ENCODE measurements at regions of chr20 and their contacts with region 1.

Region 1: GRCh38 chr20:33810885-33811777 is at the start of gene CHMP4B:
- DNase-seq: peak; percentile 100
- H3K4me3 ChIP-seq: peak within 1 kb of the TSS; percentile 49
- H3K4me3 Mint-ChIP-seq: peak within 1 kb of the TSS; percentile 97
- H3K27ac Mint-ChIP-seq: peak within 1 kb of the TSS; percentile 96
- H3K4me1 ChIP-seq: peaks cover 34% of the 10 kb centered on the region
- H3K4me1 Mint-ChIP-seq: peaks cover 28% of the 10 kb centered on the region
- H3K27me3 ChIP-seq: no peaks in the 10 kb centered on the region
- H3K27me3 Mint-ChIP-seq: no peaks in the 10 kb centered on the region
- CTCF ChIP-seq: no peak
- total RNA-seq, gene CHMP4B: 190 and 203 TPM in 2 replicates

Region 2: DNA sequence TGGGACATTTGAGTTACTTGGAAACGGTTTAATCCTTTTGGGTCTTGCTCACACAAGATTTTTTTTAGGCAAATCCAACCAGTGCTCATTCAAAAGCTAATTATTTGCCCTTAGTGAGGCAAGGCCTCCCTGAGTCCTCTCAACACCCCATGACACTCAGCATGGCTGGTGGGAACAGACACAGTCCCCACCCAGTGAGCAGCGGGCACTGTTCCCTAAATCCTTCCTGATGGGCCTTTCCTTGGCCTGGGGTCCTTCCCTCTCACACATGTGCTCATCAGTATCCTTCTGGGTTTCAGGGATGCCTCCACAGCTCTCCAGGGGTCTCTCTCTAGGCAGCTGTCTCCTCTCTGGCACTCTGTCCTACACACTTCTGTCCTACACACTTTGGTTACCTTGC is 1631.6 kb before region 1 on chr20:
- CTCF ChIA-PET with region 1: no interaction called
- POLR2A ChIA-PET with region 1: no interaction called
- intact Hi-C with region 1: no loop called
- DNase-seq: no peak
- H3K4me3 ChIP-seq: no peak overlapping the region
- H3K4me3 Mint-ChIP-seq: no peak overlapping the region
- H3K27ac Mint-ChIP-seq: no peak overlapping the region
- H3K4me1 ChIP-seq: peaks cover 12% of the 10 kb centered on the region
- H3K4me1 Mint-ChIP-seq: no peaks in the 10 kb centered on the region
- H3K27me3 ChIP-seq: no peaks in the 10 kb centered on the region
- H3K27me3 Mint-ChIP-seq: no peaks in the 10 kb centered on the region
- CTCF ChIP-seq: no peak

Region 3: GRCh38 chr20:33674295-33675135 is 136.6 kb before region 1 on chr20 and contains the start of gene NECAB3:
- CTCF ChIA-PET with region 1: interaction called, 3 read pairs
- POLR2A ChIA-PET with region 1: no interaction called
- intact Hi-C with region 1: loop called (anchors 5 kb)
- DNase-seq: peak; percentile 91 to 98
- H3K4me3 ChIP-seq: peak within 1 kb of the TSS; percentile 85
- H3K4me3 Mint-ChIP-seq: peak within 1 kb of the TSS; percentile 99
- H3K27ac Mint-ChIP-seq: peak within 1 kb of the TSS; percentile 98
- H3K4me1 ChIP-seq: peaks cover 18% of the 10 kb centered on the region
- H3K4me1 Mint-ChIP-seq: peaks cover 39% of the 10 kb centered on the region
- H3K27me3 ChIP-seq: no peaks in the 10 kb centered on the region
- H3K27me3 Mint-ChIP-seq: no peaks in the 10 kb centered on the region
- CTCF ChIP-seq: no peak
- total RNA-seq, gene NECAB3: 98.4 and 105 TPM in 2 replicates

Region 4: DNA sequence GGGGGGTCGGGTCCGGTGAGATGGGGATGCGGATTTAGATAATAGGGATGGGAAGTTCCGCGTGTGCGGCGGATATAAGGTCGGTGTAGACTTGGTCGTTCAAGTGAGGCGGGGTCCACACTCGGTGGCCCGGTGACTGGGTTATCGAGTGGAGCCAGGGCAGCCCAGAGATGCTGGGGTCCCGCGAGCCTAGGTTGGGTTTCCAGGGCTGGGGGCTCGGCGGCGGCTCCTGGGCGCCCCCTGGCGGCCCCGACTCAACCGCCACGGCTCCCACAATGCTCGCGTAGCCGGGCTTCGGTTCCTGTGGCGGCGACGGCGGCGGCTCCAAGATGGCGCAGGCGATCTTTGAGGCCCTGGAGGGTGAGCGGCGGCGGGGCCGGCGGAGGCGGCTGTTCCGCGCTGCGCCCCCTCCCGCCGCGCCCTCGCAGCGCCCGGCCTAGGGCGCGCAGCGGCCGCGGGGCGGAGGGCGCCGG is 79.4 kb before region 1 on chr20 and contains the start of gene ZNF341:
- CTCF ChIA-PET with region 1: interaction called, 8 read pairs
- POLR2A ChIA-PET with region 1: interaction called, 26 read pairs
- intact Hi-C with region 1: loop called (anchors 1 kb)
- DNase-seq: peak in 1 of 2 experiments; percentile 97
- H3K4me3 ChIP-seq: peak within 1 kb of the TSS; percentile 72
- H3K4me3 Mint-ChIP-seq: peak within 1 kb of the TSS; percentile 94
- H3K27ac Mint-ChIP-seq: peak within 1 kb of the TSS; percentile 88
- H3K4me1 ChIP-seq: peaks cover 23% of the 10 kb centered on the region
- H3K4me1 Mint-ChIP-seq: peaks cover 27% of the 10 kb centered on the region
- H3K27me3 ChIP-seq: no peaks in the 10 kb centered on the region
- H3K27me3 Mint-ChIP-seq: no peaks in the 10 kb centered on the region
- CTCF ChIP-seq: peak; percentile 96 to 99
- total RNA-seq, gene ZNF341: 2.9 and 4.6 TPM in 2 replicates

Region 5: GRCh38 chr20:33826270-33826897 is 15.3 kb after region 1 on chr20:
- CTCF ChIA-PET with region 1: interaction called, 20 read pairs
- POLR2A ChIA-PET with region 1: interaction called, 39 read pairs
- intact Hi-C with region 1: loop called (anchors 2 kb)
- DNase-seq: peak; percentile 92 to 94
- H3K4me3 ChIP-seq: peak overlapping the region; percentile 1; the same call in 1 of the 2 replicates
- H3K4me3 Mint-ChIP-seq: peak overlapping the region; percentile 43
- H3K27ac Mint-ChIP-seq: peak overlapping the region; percentile 80
- H3K4me1 ChIP-seq: peaks cover 55% of the 10 kb centered on the region
- H3K4me1 Mint-ChIP-seq: peaks cover 58% of the 10 kb centered on the region
- H3K27me3 ChIP-seq: no peaks in the 10 kb centered on the region
- H3K27me3 Mint-ChIP-seq: no peaks in the 10 kb centered on the region
- CTCF ChIP-seq: no peak

Region 6: GRCh38 chr20:34111702-34112599 is 300.8 kb after region 1 on chr20 and contains the start of gene EIF2S2:
- CTCF ChIA-PET with region 1: interaction called, 4 read pairs
- POLR2A ChIA-PET with region 1: interaction called, 15 read pairs
- intact Hi-C with region 1: loop called (anchors 1 kb)
- DNase-seq: peak; percentile 100
- H3K4me3 ChIP-seq: peak within 1 kb of the TSS; percentile 98
- H3K4me3 Mint-ChIP-seq: peak within 1 kb of the TSS; percentile 77
- H3K27ac Mint-ChIP-seq: peak within 1 kb of the TSS; percentile 99
- H3K4me1 ChIP-seq: peaks cover 8% of the 10 kb centered on the region
- H3K4me1 Mint-ChIP-seq: peaks cover 37% of the 10 kb centered on the region
- H3K27me3 ChIP-seq: no peaks in the 10 kb centered on the region
- H3K27me3 Mint-ChIP-seq: no peaks in the 10 kb centered on the region
- CTCF ChIP-seq: no peak
- total RNA-seq, gene EIF2S2: 291 and 299 TPM in 2 replicates

Measured in Caco-2 (cell line).